SK-N-SH (cell line): ENCODE measurements at regions of chr15 and their contacts with region 1.

Region 1: GRCh38 chr15:78131295-78132061 is at the start of gene CIB2:
- DNase-seq: peak; percentile 99
- H3K4me3 ChIP-seq: peak within 1 kb of the TSS; percentile 68 to 81
- H3K27ac ChIP-seq: peak within 1 kb of the TSS; percentile 48 to 74
- H3K4me1 ChIP-seq: peaks cover 0 to 7% of the 10 kb centered on the region in 2 experiments; a peak in 1 of 4 replicates
- H3K27me3 ChIP-seq: no peaks in the 10 kb centered on the region
- CTCF ChIP-seq: peak; percentile 57
- EP300 ChIP-seq: peak in 1 of 2 experiments; percentile 10; a peak in 1 of 4 replicates
- RAD21 ChIP-seq: peak; percentile 62
- polyA plus RNA-seq, gene CIB2: 39.6 and 40.8 TPM in 2 replicates

Region 2: GRCh38 chr15:78120523-78120922 is 11.0 kb before region 1 on chr15:
- CTCF ChIA-PET with region 1: interaction called, 21 read pairs
- POLR2A ChIA-PET with region 1: no interaction called
- DNase-seq: no peak
- H3K4me3 ChIP-seq: no peak overlapping the region
- H3K27ac ChIP-seq: no peak overlapping the region
- H3K4me1 ChIP-seq: no peaks in the 10 kb centered on the region
- H3K27me3 ChIP-seq: no peaks in the 10 kb centered on the region
- CTCF ChIP-seq: no peak
- EP300 ChIP-seq: no peak
- RAD21 ChIP-seq: no peak

Region 3: DNA sequence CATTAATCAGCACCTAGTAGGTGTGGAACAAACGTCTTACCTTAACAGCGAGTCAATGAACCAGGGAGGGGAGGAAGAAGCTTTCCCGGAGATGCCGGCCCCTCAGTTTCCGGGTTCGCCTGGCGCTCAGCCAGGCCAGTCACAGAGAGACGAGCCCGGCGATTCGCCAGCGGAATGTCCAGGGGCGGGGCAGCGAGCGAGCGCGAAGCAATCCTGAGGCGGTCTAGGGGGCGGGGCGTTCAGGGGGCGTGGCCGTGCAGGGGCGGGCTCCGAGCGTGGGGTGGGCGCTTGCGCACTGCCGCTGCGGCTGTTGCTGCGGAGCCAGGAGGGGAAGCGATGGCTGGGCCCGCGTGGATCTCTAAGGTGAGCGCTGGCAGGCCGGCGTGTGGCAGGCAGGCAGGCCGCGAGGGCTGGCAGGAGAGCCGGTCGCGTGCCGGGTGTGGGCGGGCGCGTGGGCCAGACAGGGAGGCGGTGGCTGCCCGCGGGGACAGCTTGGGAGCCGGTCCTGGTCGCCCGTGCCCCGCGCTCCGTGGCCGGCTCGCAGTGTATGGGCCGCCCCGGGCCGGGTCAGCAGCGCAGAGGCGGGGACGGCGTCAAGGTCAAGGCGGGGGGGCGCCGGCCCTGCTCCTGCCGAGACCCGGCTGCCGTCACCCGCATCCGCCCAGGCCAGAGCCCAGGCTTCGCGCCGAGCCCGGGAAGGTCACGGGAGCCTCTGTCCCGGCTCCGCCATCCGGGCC is 17.8 kb after region 1 on chr15 and contains the start of gene IDH3A:
- CTCF ChIA-PET with region 1: interaction called, 24 read pairs
- POLR2A ChIA-PET with region 1: interaction called, 9 read pairs
- DNase-seq: peak; percentile 100
- H3K4me3 ChIP-seq: peak within 1 kb of the TSS; percentile 61 to 77
- H3K27ac ChIP-seq: peak within 1 kb of the TSS; percentile 41 to 54
- H3K4me1 ChIP-seq: peaks cover 7 to 12% of the 10 kb centered on the region in 2 experiments
- H3K27me3 ChIP-seq: no peaks in the 10 kb centered on the region
- CTCF ChIP-seq: no peak
- EP300 ChIP-seq: peak in 1 of 2 experiments; percentile 6; a peak in 1 of 4 replicates
- RAD21 ChIP-seq: no peak
- polyA plus RNA-seq, gene IDH3A: 33.2 and 34.0 TPM in 2 replicates